PC-9 (cell line): ENCODE measurements at regions of chr19 and their contacts with region 1.

Region 1: GRCh38 chr19:40200341-40201099 is 9.3 kb downstream of the MAP3K10 start:
- DNase-seq: no peak
- H3K4me3 ChIP-seq: no peak overlapping the region
- H3K27ac ChIP-seq: no peak overlapping the region
- H3K4me1 ChIP-seq: no peaks in the 10 kb centered on the region
- H3K27me3 ChIP-seq: no peaks in the 10 kb centered on the region
- CTCF ChIP-seq: no peak

Region 2: GRCh38 chr19:40178756-40179155 is 21.8 kb before region 1 on chr19:
- CTCF ChIA-PET with region 1: interaction called, 21 read pairs
- POLR2A ChIA-PET with region 1: no interaction called
- intact Hi-C with region 1: no loop called
- DNase-seq: no peak
- H3K4me3 ChIP-seq: no peak overlapping the region
- H3K27ac ChIP-seq: no peak overlapping the region
- H3K4me1 ChIP-seq: no peaks in the 10 kb centered on the region
- H3K27me3 ChIP-seq: no peaks in the 10 kb centered on the region
- CTCF ChIP-seq: no peak

Region 3: DNA sequence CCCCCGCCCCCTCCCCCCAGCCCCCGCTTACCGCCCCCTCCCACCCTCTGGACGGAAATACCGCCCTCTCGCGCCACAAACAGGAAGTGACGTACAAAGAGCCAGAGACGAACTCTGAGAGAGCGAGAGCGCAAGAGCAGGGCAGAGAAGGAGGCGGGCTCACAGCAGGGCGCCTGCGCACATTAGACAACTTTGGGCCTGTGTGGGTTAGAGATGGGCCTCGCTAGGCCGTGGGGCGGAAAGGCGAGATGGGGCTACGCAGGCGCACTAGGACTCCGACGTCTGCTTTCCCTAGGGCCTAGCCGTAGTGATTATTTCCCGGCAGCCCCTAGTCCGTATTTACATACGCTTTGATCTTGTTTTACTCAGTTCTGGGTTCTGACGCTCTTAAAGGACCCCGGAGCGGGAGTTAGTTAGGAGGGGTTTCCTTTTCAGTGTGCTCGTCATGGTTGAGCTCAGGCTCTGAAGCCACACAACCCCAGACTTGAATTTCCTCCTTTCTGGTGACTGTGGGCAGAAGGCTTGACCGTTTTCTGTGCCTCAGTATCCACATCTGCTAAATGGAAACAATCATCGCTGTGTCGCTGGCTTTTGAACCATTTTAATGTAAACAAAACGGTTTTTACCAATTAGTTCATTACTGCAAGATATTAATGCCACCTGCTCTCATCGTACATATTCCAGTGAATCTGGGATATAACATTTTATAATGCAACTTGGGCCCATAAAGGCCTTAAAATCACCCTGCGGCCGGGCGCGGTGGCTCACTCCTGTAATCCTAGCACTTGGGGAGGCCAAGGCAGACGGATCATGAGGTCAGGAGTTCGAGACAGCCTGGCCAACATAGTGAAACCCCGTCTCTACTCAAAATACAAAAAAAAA is 85.1 kb after region 1 on chr19:
- CTCF ChIA-PET with region 1: no interaction called
- POLR2A ChIA-PET with region 1: no interaction called
- intact Hi-C with region 1: no loop called
- DNase-seq: peak; percentile 97 to 98
- H3K4me3 ChIP-seq: peak overlapping the region; percentile 53
- H3K27ac ChIP-seq: peak overlapping the region; percentile 83
- H3K4me1 ChIP-seq: peaks cover 17% of the 10 kb centered on the region; the same call in 1 of the 2 replicates
- H3K27me3 ChIP-seq: no peaks in the 10 kb centered on the region
- CTCF ChIP-seq: no peak